HAP-1 (cell line): ENCODE measurements at regions of chr2 and their contacts with region 1.

Region 1: GRCh38 chr2:113370478-113371091 is 66.9 kb upstream of the ZNG1B start:
- DNase-seq: peak; percentile 61 to 69
- H3K4me3 ChIP-seq: no peak overlapping the region
- H3K4me1 ChIP-seq: no peaks in the 10 kb centered on the region
- H3K27me3 ChIP-seq: no peaks in the 10 kb centered on the region; the same call in 1 of the 2 replicates

Region 2: GRCh38 chr2:113138428-113139322 is 231.9 kb before region 1 on chr2:
- in situ Hi-C with region 1: loop called (anchors 10 kb)
- DNase-seq: peak; percentile 64 to 71
- H3K4me3 ChIP-seq: no peak overlapping the region
- H3K4me1 ChIP-seq: no peaks in the 10 kb centered on the region
- H3K27me3 ChIP-seq: no peaks in the 10 kb centered on the region

Region 3: DNA sequence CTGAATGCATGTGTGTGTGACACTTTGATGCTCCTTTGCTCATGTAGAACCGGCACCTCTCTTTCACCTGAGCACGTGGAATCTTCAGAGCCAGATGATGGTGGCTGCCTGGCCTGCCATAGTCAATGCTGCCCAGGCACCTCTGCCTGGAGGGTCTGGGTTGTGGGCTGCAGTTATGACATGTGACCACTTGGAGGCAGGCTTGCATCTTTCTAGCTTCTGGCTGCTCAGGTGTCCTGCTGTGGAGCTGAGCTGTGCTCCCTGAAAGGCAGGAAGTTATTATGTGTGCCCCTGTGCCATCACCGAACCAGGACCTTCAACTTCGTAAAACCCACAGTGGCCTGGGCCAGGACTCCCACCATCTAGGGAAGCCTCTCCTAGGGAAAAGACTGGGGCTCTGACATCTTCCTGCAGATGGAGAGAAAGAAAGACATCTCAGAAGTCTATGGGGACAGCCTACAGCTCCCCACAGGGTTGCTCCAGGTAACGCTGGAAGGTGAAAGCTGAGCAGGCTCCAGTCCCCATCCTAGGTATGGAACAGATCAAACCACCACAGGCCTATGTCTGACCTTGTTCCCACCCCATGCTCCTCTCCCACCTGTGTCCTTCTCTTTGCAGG is 166.6 kb before region 1 on chr2:
- in situ Hi-C with region 1: loop called (anchors 10 kb)
- DNase-seq: peak; percentile 56 to 82
- H3K4me3 ChIP-seq: no peak overlapping the region
- H3K4me1 ChIP-seq: no peaks in the 10 kb centered on the region
- H3K27me3 ChIP-seq: no peaks in the 10 kb centered on the region

Region 4: GRCh38 chr2:113324684-113325160 is 45.9 kb before region 1 on chr2:
- in situ Hi-C with region 1: no loop called
- DNase-seq: peak; percentile 72 to 88
- H3K4me3 ChIP-seq: peak overlapping the region; percentile 17
- H3K4me1 ChIP-seq: peaks cover 3% of the 10 kb centered on the region; the same call in 1 of the 2 replicates
- H3K27me3 ChIP-seq: no peaks in the 10 kb centered on the region